ENCODE measurements at regions of chr17 and their contacts with region 1.

Region 1: GRCh38 chr17:76397687-76398487 is 13.5 kb downstream of the SPHK1 start:
- DNase-seq: no peak
- H3K4me3 ChIP-seq: no peak overlapping the region
- H3K27me3 ChIP-seq: no peaks in the 10 kb centered on the region
- CTCF ChIP-seq: peak; percentile 96

Region 2: DNA sequence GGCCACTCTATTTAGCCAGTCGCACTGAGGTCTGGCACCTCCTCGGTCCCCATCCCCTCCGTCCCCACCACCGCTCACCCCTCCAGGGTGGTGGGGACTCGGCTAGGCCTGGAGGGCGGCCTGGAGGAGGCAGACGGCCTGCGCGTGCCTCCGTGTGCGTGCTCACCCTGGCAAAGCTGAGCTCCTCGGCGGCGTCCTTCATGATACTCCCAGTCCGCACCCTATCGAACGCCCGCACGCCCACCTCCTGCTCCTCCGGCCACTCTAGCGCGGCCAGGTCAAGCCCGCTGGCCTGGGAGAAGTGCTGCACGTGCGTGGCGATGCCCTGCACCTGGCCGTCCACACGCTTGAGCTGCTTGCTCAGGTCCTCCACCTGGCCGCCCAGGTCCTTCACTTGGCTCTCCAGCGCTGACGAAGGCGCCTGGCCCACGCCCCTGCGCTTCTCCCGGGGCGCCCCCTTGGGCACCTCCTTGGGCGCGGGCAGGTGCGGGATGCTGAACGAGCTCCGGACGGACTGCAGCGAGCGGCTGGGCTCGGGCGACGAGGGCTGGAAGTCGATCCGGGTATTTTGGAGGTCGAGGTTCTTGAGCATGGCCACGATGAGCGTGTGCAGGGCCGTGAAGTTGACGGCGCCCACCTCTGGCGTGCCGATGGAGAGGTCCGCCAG is 90.5 kb before region 1 on chr17:
- CTCF ChIA-PET with region 1: interaction called, 203 read pairs
- POLR2A ChIA-PET with region 1: no interaction called
- DNase-seq: no peak
- H3K4me3 ChIP-seq: no peak overlapping the region
- H3K27me3 ChIP-seq: no peaks in the 10 kb centered on the region
- CTCF ChIP-seq: no peak

Region 3: DNA sequence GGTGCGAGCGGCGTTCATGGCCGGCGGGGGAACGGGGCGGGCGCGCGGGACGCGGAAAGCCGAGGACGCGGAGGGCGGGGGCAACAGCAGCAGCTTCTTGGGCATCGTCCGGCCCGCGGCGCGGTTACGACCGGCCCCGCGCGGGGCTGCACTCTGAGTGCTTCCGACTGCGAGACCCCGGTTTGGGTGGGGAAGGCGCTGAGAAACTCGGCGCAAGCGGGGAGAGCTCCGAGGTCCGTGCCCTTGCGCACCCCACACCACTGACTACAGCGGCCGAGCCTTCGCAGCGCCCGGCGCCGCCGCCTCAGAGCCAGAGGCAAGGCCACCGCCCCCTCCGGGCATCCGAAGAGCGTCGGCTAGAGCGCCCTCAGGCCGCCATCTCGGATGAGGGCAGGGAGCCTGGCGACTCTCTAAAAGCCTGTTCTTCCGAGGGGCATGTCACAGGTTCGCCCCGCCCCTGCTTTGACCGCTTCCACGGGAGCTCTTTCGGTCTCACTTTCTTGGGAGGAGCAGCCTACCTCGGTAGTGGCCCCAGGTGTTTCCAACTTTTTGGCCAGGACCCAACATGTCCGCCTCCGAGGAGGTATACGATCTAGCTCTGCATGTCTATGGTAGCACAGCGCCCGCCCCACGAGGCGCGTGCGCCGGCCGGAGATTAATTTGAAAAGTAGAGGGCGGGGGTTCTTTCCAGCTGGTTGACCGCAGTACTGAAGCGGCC is 44.1 kb before region 1 on chr17 and contains the start of gene PRPSAP1:
- CTCF ChIA-PET with region 1: interaction called, 27 read pairs
- POLR2A ChIA-PET with region 1: no interaction called
- DNase-seq: no peak
- H3K4me3 ChIP-seq: peak within 1 kb of the TSS; percentile 93
- H3K27me3 ChIP-seq: no peaks in the 10 kb centered on the region
- CTCF ChIP-seq: peak; percentile 80
- polyA plus RNA-seq, gene PRPSAP1: 68.5 and 72.8 TPM in 2 replicates

Region 4: GRCh38 chr17:76384222-76384986 is 13.5 kb before region 1 on chr17 and contains the start of gene SPHK1:
- CTCF ChIA-PET with region 1: interaction called, 127 read pairs
- POLR2A ChIA-PET with region 1: no interaction called
- DNase-seq: no peak
- H3K4me3 ChIP-seq: peak within 1 kb of the TSS; percentile 76
- H3K27me3 ChIP-seq: no peaks in the 10 kb centered on the region
- CTCF ChIP-seq: no peak
- polyA plus RNA-seq, gene SPHK1: 21.4 and 57.8 TPM in 2 replicates

Region 5: DNA sequence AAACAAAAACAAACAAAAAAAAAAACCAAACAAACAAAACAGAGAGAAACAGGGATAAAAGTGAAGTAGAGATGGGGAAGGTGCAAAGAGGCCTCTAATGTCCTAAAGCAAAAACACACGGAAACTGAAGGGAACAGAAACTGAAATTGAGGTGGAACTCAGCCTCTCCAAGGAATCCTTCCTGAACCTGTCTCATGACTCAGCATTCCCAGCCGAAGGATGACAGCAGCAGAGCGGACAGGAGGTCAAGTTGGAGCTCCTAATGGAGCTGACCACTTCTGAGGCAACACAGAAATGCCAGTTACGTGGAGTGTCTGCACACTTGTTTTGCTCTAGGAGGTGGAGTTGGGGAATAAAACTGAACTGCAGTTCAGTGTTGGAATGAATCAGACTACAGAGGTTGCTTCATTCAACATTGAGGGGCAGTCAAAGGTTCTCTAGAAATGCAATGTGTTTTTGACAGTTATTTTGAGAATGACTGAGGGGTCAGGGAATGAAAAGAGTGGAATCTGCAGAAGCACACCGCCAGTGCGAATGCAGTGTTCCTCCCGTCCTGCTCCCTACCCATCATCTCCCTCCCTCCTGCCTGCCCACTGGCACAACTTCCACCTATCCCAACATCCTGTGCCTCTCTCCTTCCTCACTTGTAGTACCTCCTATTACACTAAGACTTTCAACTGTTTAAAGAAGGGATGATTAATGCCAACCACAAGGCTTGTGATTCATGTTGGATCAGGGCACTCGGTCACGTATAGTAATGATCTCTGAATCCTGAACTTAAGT is 48.8 kb after region 1 on chr17:
- CTCF ChIA-PET with region 1: interaction called, 13 read pairs
- POLR2A ChIA-PET with region 1: no interaction called
- DNase-seq: no peak
- H3K4me3 ChIP-seq: no peak overlapping the region
- H3K27me3 ChIP-seq: no peaks in the 10 kb centered on the region
- CTCF ChIP-seq: no peak

Region 6: GRCh38 chr17:76523084-76524037 is 125.5 kb after region 1 on chr17:
- CTCF ChIA-PET with region 1: no interaction called
- POLR2A ChIA-PET with region 1: no interaction called
- DNase-seq: no peak
- H3K4me3 ChIP-seq: no peak overlapping the region
- H3K27me3 ChIP-seq: no peaks in the 10 kb centered on the region
- CTCF ChIP-seq: peak; percentile 100